Panc1 (cell line): ENCODE measurements at regions of chr1 and their contacts with region 1.

Region 1: GRCh38 chr1:160997323-160998038 is 23.5 kb downstream of the F11R start:
- DNase-seq: no peak
- ATAC-seq: peak; percentile 84
- H3K4me3 ChIP-seq: no peak overlapping the region
- H3K27ac ChIP-seq: no peak overlapping the region
- H3K4me1 ChIP-seq: no peaks in the 10 kb centered on the region
- H3K27me3 ChIP-seq: no peaks in the 10 kb centered on the region
- CTCF ChIP-seq: peak; percentile 80; the same call in 1 of the 2 replicates

Region 2: GRCh38 chr1:160675641-160676410 is 321.7 kb before region 1 on chr1:
- CTCF ChIA-PET with region 1: interaction called, 10 read pairs
- POLR2A ChIA-PET with region 1: no interaction called
- in situ Hi-C with region 1: no loop called
- intact Hi-C with region 1: no loop called
- DNase-seq: peak; percentile 42
- ATAC-seq: peak; percentile 95
- H3K4me3 ChIP-seq: no peak overlapping the region
- H3K27ac ChIP-seq: no peak overlapping the region
- H3K4me1 ChIP-seq: no peaks in the 10 kb centered on the region
- H3K27me3 ChIP-seq: peaks cover 12% of the 10 kb centered on the region; the same call in 1 of the 2 replicates
- CTCF ChIP-seq: peak; percentile 94

Region 3: GRCh38 chr1:161021165-161021960 is 23.9 kb after region 1 on chr1:
- CTCF ChIA-PET with region 1: interaction called, 10 read pairs
- POLR2A ChIA-PET with region 1: interaction called, 10 read pairs
- in situ Hi-C with region 1: no loop called
- intact Hi-C with region 1: no loop called
- DNase-seq: no peak
- ATAC-seq: peak; percentile 94
- H3K4me3 ChIP-seq: peak overlapping the region; percentile 87 to 97
- H3K27ac ChIP-seq: peak overlapping the region; percentile 67
- H3K4me1 ChIP-seq: peaks cover 27% of the 10 kb centered on the region
- H3K27me3 ChIP-seq: no peaks in the 10 kb centered on the region
- CTCF ChIP-seq: no peak

Region 4: DNA sequence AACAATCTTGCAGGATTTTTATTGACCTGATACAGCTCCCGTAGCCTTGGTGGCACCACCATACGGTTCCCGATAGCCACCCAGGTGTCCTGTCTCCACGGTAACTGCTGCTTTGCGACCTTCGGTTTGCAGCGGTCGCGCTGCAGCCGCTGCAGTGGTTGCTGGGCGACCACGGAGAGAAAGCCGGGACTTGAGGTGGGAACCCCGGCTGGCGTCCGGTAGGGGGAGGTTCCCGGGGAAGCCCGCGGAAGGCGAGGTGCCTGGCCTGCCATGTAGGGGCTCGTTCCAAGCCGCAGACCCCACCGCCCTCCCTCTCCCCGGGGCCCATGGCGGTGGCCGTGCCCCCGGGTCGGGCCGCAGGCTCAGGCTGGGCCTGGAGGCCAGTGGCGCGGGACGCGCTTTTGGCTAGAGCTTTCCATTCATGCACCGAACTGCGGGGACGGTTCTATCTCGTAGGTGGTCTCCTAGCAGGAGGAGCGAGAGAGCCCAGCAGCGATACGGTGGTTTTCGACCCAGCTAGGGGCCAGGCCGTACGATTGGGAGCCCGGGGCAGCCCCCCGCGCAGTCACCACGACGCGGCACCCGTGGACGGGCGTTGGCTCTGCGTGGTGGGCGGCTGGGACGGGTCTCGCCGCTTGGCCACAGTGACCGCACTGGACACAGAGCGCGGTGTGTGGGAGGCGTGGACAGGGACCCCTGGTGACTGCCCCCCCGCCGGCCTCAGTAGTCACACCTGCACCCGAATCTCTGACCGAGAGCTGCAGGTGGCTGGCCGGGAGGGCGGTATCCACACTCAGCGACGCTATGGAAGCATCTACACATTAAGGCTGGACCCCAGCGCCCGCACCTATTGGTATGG is 101.0 kb after region 1 on chr1 and contains the start of gene KLHDC9:
- CTCF ChIA-PET with region 1: interaction called, 9 read pairs
- POLR2A ChIA-PET with region 1: no interaction called
- in situ Hi-C with region 1: no loop called
- intact Hi-C with region 1: loop called (anchors 2 kb)
- DNase-seq: peak; percentile 86
- ATAC-seq: peak; percentile 95
- H3K4me3 ChIP-seq: peak within 1 kb of the TSS; percentile 76 to 77
- H3K27ac ChIP-seq: peak within 1 kb of the TSS; percentile 81
- H3K4me1 ChIP-seq: 0 out of 2 replicates have a peak, but pooled peaks cover 6% of the 10 kb centered on the region
- H3K27me3 ChIP-seq: no peaks in the 10 kb centered on the region
- CTCF ChIP-seq: no peak
- total RNA-seq, gene KLHDC9: 7.6 TPM

Region 5: GRCh38 chr1:161139765-161140164 is 142.3 kb after region 1 on chr1:
- CTCF ChIA-PET with region 1: interaction called, 15 read pairs
- POLR2A ChIA-PET with region 1: no interaction called
- in situ Hi-C with region 1: no loop called
- intact Hi-C with region 1: no loop called
- DNase-seq: no peak
- ATAC-seq: peak; percentile 80; the same call in 1 of the 2 replicates
- H3K4me3 ChIP-seq: no peak overlapping the region
- H3K27ac ChIP-seq: no peak overlapping the region
- H3K4me1 ChIP-seq: no peaks in the 10 kb centered on the region
- H3K27me3 ChIP-seq: no peaks in the 10 kb centered on the region
- CTCF ChIP-seq: no peak; the same call in 1 of the 2 replicates

Region 6: GRCh38 chr1:161201828-161202725 is 204.6 kb after region 1 on chr1 and contains the start of gene NDUFS2:
- CTCF ChIA-PET with region 1: no interaction called
- POLR2A ChIA-PET with region 1: no interaction called
- in situ Hi-C with region 1: no loop called
- intact Hi-C with region 1: no loop called
- DNase-seq: peak; percentile 89
- ATAC-seq: peak; percentile 97
- H3K4me3 ChIP-seq: peak within 1 kb of the TSS; percentile 72 to 98
- H3K27ac ChIP-seq: peak within 1 kb of the TSS; percentile 96
- H3K4me1 ChIP-seq: peaks cover 38% of the 10 kb centered on the region
- H3K27me3 ChIP-seq: no peaks in the 10 kb centered on the region
- CTCF ChIP-seq: no peak
- total RNA-seq, gene NDUFS2: 94.9 TPM